PC-9 (cell line): ENCODE measurements at regions of chr10 and their contacts with region 1.

Region 1: GRCh38 chr10:16529853-16530252 is 8.2 kb upstream of the C1QL3 start:
- DNase-seq: no peak
- H3K4me3 ChIP-seq: no peak overlapping the region
- H3K27ac ChIP-seq: no peak overlapping the region
- H3K4me1 ChIP-seq: no peaks in the 10 kb centered on the region
- H3K27me3 ChIP-seq: no peaks in the 10 kb centered on the region
- CTCF ChIP-seq: no peak

Region 2: GRCh38 chr10:15871823-15872222 is 658.0 kb before region 1 on chr10:
- CTCF ChIA-PET with region 1: interaction called, 13 read pairs
- POLR2A ChIA-PET with region 1: no interaction called
- intact Hi-C with region 1: no loop called
- DNase-seq: no peak
- H3K4me3 ChIP-seq: no peak overlapping the region
- H3K27ac ChIP-seq: no peak overlapping the region
- H3K4me1 ChIP-seq: no peaks in the 10 kb centered on the region
- H3K27me3 ChIP-seq: peaks cover 20% of the 10 kb centered on the region; the same call in 1 of the 2 replicates
- CTCF ChIP-seq: no peak